WTC11 (cell line): ENCODE measurements at regions of chr22 and their contacts with region 1.

Region 1: GRCh38 chr22:29108109-29108508 is 35.3 kb downstream of the KREMEN1 start:
- DNase-seq: no peak
- ATAC-seq: no peak
- H3K4me3 Mint-ChIP-seq: no peak overlapping the region
- H3K27ac Mint-ChIP-seq: no peak overlapping the region
- H3K4me1 Mint-ChIP-seq: peaks cover 7% of the 10 kb centered on the region; the same call in 1 of the 2 replicates
- H3K27me3 Mint-ChIP-seq: no peaks in the 10 kb centered on the region
- CTCF ChIP-seq: no peak

Region 2: GRCh38 chr22:29202212-29203192 is 94.4 kb after region 1 on chr22:
- CTCF ChIA-PET with region 1: interaction called, 11 read pairs
- POLR2A ChIA-PET with region 1: no interaction called
- DNase-seq: peak; percentile 59
- ATAC-seq: peak; percentile 49
- H3K4me3 Mint-ChIP-seq: no peak overlapping the region
- H3K27ac Mint-ChIP-seq: no peak overlapping the region
- H3K4me1 Mint-ChIP-seq: peaks cover 13% of the 10 kb centered on the region
- H3K27me3 Mint-ChIP-seq: peaks cover 9% of the 10 kb centered on the region
- CTCF ChIP-seq: no peak